ENCODE measurements at regions of chr14 and their contacts with region 1.

Region 1: DNA sequence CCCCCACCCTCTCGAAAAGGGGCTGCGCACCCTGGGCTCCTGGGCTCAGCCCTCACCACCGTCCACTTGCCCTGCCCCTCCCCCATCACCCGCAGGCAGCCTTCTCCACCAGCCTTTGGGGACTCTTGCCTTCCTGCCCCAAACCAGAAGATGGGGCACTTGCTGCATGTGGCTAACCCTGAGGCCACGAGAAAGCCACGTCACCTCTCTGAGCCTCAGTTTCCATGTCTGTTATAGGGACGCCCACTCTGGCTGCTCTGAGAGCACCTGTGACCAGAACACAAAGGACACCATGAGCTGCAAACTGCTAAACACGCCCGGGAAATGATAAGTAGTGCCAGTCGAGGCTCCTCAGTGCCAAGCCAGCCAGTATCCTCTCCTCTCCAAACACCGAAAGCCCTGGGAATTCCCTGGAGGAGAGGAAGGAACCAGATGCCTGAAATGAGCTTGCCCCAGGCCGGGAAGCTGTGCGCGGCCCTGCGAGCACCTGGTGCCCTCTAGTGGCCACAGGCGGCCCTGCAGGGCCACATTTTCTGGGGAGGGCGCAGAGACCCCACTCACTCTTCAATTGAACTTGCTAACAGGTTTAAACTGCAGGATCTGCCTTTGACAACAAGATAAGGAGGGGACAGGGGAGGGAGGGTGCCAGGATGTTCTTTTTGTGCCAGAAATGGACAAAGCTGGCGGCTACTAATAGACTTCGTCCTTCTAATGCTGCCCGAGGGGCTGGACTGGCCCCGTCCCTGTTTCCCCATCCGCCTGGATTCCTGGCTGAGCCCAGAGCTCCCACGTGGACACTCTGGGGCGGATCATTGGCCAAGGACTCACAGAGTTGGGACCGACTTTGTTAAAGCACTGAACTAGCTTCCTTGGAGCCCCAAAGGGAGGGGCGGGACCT is 10.2 kb upstream of the SERPINA9 start:
- DNase-seq: peak; percentile 18 to 56 (median 47)
- H3K4me3 ChIP-seq: no peak overlapping the region
- H3K27ac ChIP-seq: no peak overlapping the region
- H3K4me1 ChIP-seq: no peaks in the 10 kb centered on the region
- H3K27me3 ChIP-seq: no peaks in the 10 kb centered on the region
- CTCF ChIP-seq: peak; percentile 80 to 99 (median 90)
- POLR2A ChIP-seq: no peak

Region 2: DNA sequence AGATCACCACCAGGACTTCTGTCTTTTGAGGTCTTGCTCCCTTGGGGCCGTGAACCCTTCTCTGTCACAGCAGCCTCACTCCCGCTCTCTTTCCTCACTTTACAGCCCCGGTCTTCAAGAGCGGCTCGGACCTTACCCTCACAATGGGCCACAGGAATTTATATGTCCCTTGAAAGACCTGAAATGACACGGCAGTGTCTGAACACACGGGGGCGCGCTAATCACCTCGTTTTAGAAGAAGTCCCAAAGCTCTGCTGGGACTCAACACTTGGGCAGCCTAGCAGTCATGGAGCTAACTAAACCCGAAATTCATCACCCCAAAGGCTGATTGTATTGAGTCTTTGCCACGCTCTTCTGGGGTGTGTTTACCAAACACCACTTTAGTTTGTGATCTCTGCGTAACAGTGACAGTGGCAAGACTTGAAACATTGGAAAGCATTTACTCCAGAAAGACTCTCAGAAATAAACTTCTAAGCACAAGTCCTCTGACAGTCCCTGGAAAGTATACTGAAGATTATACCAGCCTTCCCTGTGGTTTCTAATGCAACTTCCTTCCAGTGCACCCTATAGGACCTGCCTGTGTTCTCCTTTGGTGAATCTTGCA is 62.6 kb before region 1 on chr14:
- intact Hi-C with region 1: loop called in 1 of 2 experiments (anchors 10 kb)
- DNase-seq: peak; percentile 53 to 82 (median 78)
- H3K4me3 ChIP-seq: no peak overlapping the region
- H3K27ac ChIP-seq: no peak overlapping the region
- H3K4me1 ChIP-seq: no peaks in the 10 kb centered on the region
- H3K27me3 ChIP-seq: peaks cover 4% of the 10 kb centered on the region
- CTCF ChIP-seq: peak; percentile 30 to 63 (median 52)
- POLR2A ChIP-seq: no peak

Region 3: DNA sequence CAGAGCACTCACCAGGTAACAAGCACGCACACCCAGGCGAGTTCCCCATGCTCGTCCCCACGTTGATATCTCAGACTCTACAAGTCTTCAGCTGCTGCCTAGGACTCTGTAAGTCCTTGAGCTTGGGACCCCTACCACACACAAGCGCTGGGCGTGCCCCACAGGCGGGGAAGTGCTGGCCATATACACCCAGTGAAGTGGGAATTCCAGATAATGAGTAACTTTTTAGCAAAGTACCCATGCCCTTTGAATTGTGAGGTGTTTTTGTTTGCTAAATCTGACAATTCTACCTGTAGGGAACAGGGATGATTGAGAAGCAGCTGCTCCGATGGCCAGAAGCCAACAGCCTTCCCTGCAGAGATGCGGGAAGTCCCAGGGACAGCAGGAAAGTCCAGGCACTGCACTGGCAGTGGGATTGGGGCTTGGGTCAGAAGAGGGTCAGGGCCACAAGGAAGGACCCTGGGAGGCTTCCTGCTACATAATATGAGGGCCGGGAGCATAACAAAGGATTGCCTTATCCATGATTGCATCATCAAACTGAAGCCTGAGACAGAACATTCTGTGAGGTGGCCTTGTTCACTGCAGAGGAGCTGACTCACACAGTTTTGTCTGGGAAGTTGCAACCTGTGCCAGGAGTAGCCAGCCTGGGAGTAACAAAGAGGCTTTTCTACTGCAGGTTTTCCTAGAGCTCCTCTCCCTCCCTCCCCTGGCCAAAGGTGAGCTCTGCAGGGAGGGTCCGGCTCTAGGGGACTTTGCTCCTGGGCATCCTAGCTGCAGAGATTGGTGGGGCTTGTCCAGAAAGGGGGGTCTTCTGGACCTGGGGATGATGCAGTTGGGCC is 112.8 kb after region 1 on chr14:
- intact Hi-C with region 1: no loop called
- DNase-seq: peak; percentile 78 to 95 (median 92)
- H3K4me3 ChIP-seq: no peak overlapping the region
- H3K27ac ChIP-seq: peak overlapping the region; percentile 82 to 96 (median 91)
- H3K4me1 ChIP-seq: peaks cover 44 to 50% of the 10 kb centered on the region in 2 donors
- H3K27me3 ChIP-seq: no peaks in the 10 kb centered on the region
- CTCF ChIP-seq: peak in 3 of 6 experiments; percentile 1 to 32 (median 26)
- POLR2A ChIP-seq: peak in 1 of 2 donors; percentile 69

Region 4: DNA sequence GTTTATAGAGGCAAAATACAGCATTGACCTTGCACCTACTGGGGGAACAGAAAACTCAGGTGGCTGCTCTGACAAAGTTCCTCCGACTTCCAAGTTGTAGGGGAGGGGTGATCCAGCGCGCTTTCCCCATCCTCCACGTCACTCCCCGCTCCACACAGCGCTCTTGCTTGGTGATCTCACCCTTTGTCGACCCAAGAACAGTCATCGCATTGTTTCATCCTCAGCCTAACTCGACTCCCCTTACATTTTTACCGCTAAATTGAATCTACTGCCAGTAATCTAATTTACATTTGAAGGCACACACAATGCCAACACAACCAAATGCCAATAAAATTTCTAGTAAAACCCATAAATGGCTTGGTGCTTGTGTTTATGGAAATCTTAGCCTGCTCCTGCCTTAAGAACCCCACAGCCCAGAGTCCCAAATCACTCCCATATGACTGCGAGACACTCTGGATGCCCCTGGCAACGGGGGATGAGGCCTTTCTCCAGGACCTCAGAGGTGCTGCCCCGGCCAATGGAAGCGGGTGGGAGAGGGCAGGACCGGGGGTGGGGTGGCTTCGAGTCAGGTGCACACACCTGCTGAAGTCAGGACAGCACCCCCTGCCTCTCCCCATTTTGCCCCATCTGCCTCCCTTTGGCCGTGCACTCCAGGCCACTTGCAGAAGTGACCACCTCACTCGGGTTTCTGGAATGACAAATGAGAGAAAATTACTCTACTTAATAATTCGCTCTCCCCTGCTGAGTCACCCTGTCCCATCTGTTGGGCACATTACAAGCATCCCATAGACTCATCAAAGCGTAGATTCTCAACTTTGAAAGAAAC is 382.0 kb after region 1 on chr14:
- intact Hi-C with region 1: no loop called
- DNase-seq: no peak
- H3K4me3 ChIP-seq: no peak overlapping the region
- H3K27ac ChIP-seq: no peak overlapping the region
- H3K4me1 ChIP-seq: no peaks in the 10 kb centered on the region
- H3K27me3 ChIP-seq: no peaks in the 10 kb centered on the region
- CTCF ChIP-seq: no peak
- POLR2A ChIP-seq: no peak

Measured in adrenal gland (tissue), 19 donors.